ENCODE measurements at regions of chr3 and their contacts with region 1.

Region 1: DNA sequence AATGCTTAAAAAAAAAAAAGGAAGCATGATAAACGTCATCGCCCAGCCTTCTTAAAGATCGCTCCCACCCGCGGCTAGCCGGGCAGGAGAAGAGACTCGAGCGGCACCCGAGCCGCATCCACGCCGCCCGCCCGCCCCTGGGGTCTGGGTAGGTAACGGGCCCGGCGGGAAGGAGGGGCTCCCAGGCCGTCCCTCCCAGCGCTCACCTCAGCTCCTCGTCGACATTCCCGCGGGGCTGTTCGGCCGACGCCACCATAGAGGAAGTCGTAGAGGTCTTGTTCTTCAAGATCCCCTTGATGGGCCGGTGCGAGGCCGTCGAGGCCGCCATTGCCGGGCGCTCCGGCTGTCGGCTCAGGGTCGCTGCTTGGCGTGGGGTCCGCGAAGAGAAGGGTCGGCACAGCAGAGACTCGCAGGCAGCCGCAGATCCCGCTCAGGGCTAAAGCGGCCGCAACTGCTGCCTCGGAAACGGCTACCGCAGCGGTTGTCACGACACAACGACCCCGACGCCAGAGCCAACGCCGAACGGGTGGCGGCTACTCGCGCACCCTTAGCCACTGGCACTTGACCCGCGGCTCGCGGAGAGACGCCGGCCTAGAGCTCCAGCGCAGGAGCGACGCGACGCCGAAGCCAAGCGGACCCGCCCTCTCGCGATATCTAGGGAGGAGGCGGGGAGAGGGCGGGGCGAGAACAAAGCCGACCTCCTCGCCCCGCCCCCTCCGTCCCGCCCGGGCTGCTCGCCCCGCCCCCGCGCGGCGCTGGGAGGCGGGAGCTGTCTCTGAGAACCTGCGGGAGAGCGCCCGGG is at the start of gene PPP1R2:
- DNase-seq: peak; percentile 82 to 97 (median 91)
- ATAC-seq: peak; percentile 80
- H3K4me3 ChIP-seq: peak within 1 kb of the TSS; percentile 70
- H3K4me3 Mint-ChIP-seq: peak within 1 kb of the TSS; percentile 88
- H3K27ac ChIP-seq: peak within 1 kb of the TSS; percentile 95 to 96
- H3K27ac Mint-ChIP-seq: peak within 1 kb of the TSS; percentile 93
- H3K4me1 ChIP-seq: peaks cover 52% of the 10 kb centered on the region
- H3K4me1 Mint-ChIP-seq: peaks cover 76% of the 10 kb centered on the region
- H3K27me3 ChIP-seq: no peaks in the 10 kb centered on the region
- H3K27me3 Mint-ChIP-seq: no peaks in the 10 kb centered on the region
- CTCF ChIP-seq: no peak
- total RNA-seq, gene PPP1R2: 205 to 210 TPM

Region 2: DNA sequence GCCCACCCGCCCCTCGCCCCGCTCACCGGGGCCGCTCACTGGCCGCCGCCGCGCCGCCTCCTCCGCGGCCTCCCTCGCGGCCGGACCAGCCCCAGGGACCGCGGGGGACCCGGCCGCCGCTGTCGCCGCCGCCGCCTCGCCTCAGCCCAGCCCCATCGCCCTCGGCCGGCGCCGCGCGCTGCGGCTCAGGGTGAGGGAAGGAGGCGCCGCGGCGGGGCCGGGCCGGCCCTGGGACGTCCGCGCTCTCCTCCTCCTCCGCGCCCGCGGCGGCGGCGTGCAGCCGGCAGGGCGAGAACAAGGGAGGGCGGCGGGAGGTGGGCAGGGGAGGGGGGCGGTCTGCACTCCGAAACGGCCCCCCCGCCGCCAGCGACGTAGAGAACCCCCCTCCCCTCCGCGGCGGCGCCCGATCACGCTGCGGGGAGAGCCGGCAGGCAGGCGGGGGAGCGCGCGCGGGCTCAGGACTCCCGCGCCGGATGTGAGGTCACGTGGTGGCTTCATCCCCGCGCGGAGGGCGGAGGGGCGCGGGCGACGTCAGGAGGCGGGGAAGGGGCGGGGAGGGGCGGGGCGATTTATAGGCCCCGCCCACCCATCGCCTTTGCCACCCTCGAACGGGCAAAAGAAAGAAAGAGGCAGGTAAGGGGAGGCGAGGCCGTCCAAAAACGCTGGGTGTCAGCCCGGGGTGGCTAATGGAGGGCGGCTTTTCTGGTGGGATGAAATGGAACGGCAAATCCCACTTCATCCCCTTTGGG is 1056.2 kb before region 1 on chr3 and contains the start of gene ATP13A3:
- CTCF ChIA-PET with region 1: no interaction called
- POLR2A ChIA-PET with region 1: no interaction called
- intact Hi-C with region 1: loop called in 1 of 2 experiments (anchors 10 kb)
- DNase-seq: peak; percentile 78 to 97 (median 90)
- ATAC-seq: peak; percentile 83
- H3K4me3 ChIP-seq: peak within 1 kb of the TSS; percentile 81
- H3K4me3 Mint-ChIP-seq: peak within 1 kb of the TSS; percentile 97
- H3K27ac ChIP-seq: peak within 1 kb of the TSS; percentile 66 to 76
- H3K27ac Mint-ChIP-seq: peak within 1 kb of the TSS; percentile 89
- H3K4me1 ChIP-seq: peaks cover 34% of the 10 kb centered on the region
- H3K4me1 Mint-ChIP-seq: peaks cover 44% of the 10 kb centered on the region
- H3K27me3 ChIP-seq: no peaks in the 10 kb centered on the region
- H3K27me3 Mint-ChIP-seq: no peaks in the 10 kb centered on the region
- CTCF ChIP-seq: no peak
- total RNA-seq, gene ATP13A3: 46.5 to 52.7 TPM

Region 3: DNA sequence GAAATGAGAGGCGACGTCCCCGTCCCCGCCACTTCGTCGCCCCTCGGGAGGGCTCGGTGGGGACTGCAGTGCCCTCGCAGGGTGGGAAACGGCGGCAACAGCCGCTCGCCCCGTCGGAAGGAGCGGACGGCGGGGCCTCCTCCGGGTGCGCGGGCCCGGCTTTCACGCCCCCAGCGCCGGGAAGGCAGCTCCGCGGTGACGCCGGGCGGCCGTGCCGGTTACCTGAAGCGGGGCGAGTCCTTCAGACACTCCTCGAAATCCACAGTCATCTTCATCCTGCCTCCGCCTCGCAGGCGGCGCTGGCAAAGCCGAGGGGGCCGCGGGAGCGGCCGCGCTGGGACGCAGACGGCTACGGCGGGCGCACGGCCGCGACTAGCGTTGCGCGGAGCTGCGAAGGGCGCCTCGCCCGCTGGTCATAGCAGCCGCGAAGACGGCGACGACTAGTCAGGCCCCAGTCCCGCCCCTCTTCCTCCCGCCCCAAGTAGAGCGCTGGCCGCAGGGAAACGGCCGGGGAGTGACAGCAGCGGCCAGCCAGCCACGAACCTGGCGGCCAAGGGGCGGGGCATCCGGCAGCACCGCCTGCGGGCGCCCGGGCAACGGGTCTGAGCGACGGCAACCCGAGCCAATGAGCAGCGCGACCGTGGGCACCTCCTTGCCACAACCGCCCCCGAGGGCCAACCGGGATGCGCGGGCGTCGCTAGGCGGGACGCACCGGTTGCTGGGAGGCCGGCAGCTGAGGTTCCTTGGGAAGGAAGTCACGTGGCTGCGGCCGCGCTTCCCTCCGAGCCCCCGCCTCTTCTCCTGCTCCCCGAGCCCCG is 100.1 kb before region 1 on chr3 and contains the start of gene ACAP2:
- CTCF ChIA-PET with region 1: no interaction called
- POLR2A ChIA-PET with region 1: interaction called, 20 read pairs
- intact Hi-C with region 1: no loop called
- DNase-seq: peak; percentile 95 to 100 (median 99)
- ATAC-seq: peak; percentile 91
- H3K4me3 ChIP-seq: peak within 1 kb of the TSS; percentile 89
- H3K4me3 Mint-ChIP-seq: peak within 1 kb of the TSS; percentile 98
- H3K27ac ChIP-seq: peak within 1 kb of the TSS; percentile 74 to 85
- H3K27ac Mint-ChIP-seq: peak within 1 kb of the TSS; percentile 93
- H3K4me1 ChIP-seq: peaks cover 32% of the 10 kb centered on the region
- H3K4me1 Mint-ChIP-seq: peaks cover 65% of the 10 kb centered on the region
- H3K27me3 ChIP-seq: no peaks in the 10 kb centered on the region
- H3K27me3 Mint-ChIP-seq: no peaks in the 10 kb centered on the region
- CTCF ChIP-seq: no peak
- total RNA-seq, gene ACAP2: 50.7 to 51.4 TPM

Region 4: DNA sequence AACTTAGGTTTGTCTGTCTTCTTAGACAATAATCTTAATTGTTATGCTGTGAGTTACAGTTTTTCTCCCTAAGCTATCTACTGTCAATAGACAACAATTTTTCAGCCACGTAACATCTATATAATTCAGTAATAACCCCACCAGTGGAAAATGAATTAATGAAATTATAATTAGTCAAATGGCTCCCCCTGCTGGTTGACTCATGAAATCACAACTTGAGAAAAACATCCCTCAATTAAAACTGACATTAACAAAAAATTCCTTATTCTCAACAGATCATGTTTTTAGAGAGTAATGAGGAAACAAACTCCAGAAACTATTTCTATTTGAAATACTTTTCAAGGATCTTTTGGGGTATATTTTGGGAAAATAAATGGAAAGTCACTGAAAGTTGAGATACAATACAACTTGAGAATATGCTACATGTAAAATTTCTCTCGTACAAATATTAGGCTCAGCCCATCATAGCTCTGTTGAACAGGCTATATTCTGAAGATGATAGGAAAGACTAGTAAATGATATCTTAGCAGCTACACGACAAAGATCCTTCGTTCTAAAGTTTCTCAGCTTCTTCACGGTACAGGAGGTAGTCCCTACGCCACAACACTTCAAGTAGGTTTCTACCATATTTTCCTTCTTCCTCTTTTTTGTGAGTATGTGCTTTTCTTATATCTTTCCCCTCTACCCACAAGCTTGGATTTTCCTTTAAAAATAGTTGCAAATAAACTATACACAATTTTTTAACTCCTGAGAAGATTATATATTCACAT is 20.5 kb before region 1 on chr3:
- CTCF ChIA-PET with region 1: interaction called, 5 read pairs
- POLR2A ChIA-PET with region 1: interaction called, 23 read pairs
- intact Hi-C with region 1: loop called (anchors 2 kb)
- DNase-seq: peak in 4 of 14 experiments; percentile 59 to 71 (median 63)
- ATAC-seq: peak; percentile 34
- H3K4me3 ChIP-seq: no peak overlapping the region
- H3K4me3 Mint-ChIP-seq: no peak overlapping the region
- H3K27ac ChIP-seq: no peak overlapping the region
- H3K27ac Mint-ChIP-seq: peak overlapping the region; percentile 82
- H3K4me1 ChIP-seq: peaks cover 28% of the 10 kb centered on the region
- H3K4me1 Mint-ChIP-seq: peaks cover 59% of the 10 kb centered on the region
- H3K27me3 ChIP-seq: no peaks in the 10 kb centered on the region
- H3K27me3 Mint-ChIP-seq: no peaks in the 10 kb centered on the region
- CTCF ChIP-seq: peak; percentile 93

Region 5: DNA sequence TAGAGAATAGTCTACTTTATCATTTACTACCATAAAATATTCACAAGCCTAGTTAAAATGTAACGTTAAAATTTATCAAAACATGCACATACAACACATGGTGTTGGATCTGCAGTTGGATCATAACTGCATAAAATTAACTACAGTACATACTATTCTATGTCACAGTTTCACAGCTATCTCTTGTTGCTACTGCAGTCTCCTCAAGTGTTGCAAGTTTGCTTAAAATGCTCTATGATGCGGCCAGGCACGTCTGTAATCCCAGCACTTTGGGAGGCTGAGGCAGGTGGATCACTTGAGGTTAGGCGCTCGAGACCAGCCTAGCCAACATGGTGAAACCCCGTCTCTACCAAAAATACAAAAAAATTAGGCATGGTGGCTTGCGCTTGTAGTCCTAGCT is 10.1 kb before region 1 on chr3:
- CTCF ChIA-PET with region 1: interaction called, 5 read pairs
- POLR2A ChIA-PET with region 1: interaction called, 28 read pairs
- intact Hi-C with region 1: no loop called
- DNase-seq: no peak
- ATAC-seq: no peak
- H3K4me3 ChIP-seq: no peak overlapping the region
- H3K4me3 Mint-ChIP-seq: peak overlapping the region; percentile 56
- H3K27ac ChIP-seq: no peak overlapping the region
- H3K27ac Mint-ChIP-seq: peak overlapping the region; percentile 62
- H3K4me1 ChIP-seq: peaks cover 54% of the 10 kb centered on the region
- H3K4me1 Mint-ChIP-seq: peaks cover 82% of the 10 kb centered on the region
- H3K27me3 ChIP-seq: no peaks in the 10 kb centered on the region
- H3K27me3 Mint-ChIP-seq: no peaks in the 10 kb centered on the region
- CTCF ChIP-seq: no peak

Region 6: GRCh38 chr3:195558602-195559001 is 15.7 kb after region 1 on chr3:
- CTCF ChIA-PET with region 1: interaction called, 33 read pairs
- POLR2A ChIA-PET with region 1: interaction called, 202 read pairs
- intact Hi-C with region 1: no loop called
- DNase-seq: peak in 6 of 14 experiments; percentile 32 to 80 (median 64)
- ATAC-seq: peak; percentile 78
- H3K4me3 ChIP-seq: no peak overlapping the region
- H3K4me3 Mint-ChIP-seq: peak overlapping the region; percentile 50
- H3K27ac ChIP-seq: no peak overlapping the region
- H3K27ac Mint-ChIP-seq: peak overlapping the region; percentile 72
- H3K4me1 ChIP-seq: peaks cover 28% of the 10 kb centered on the region
- H3K4me1 Mint-ChIP-seq: peaks cover 42% of the 10 kb centered on the region
- H3K27me3 ChIP-seq: no peaks in the 10 kb centered on the region
- H3K27me3 Mint-ChIP-seq: no peaks in the 10 kb centered on the region
- CTCF ChIP-seq: peak; percentile 77

Region 7: GRCh38 chr3:195612075-195612800 is 69.3 kb after region 1 on chr3:
- CTCF ChIA-PET with region 1: no interaction called
- POLR2A ChIA-PET with region 1: interaction called, 11 read pairs
- intact Hi-C with region 1: no loop called
- DNase-seq: no peak
- ATAC-seq: no peak
- H3K4me3 ChIP-seq: no peak overlapping the region
- H3K4me3 Mint-ChIP-seq: no peak overlapping the region
- H3K27ac ChIP-seq: no peak overlapping the region
- H3K27ac Mint-ChIP-seq: no peak overlapping the region
- H3K4me1 ChIP-seq: peaks cover 28% of the 10 kb centered on the region
- H3K4me1 Mint-ChIP-seq: peaks cover 54% of the 10 kb centered on the region
- H3K27me3 ChIP-seq: no peaks in the 10 kb centered on the region
- H3K27me3 Mint-ChIP-seq: no peaks in the 10 kb centered on the region
- CTCF ChIP-seq: no peak